Calu3 (cell line): ENCODE measurements at regions of chr10 and their contacts with region 1.

Region 1: GRCh38 chr10:75099952-75100763 is 11.3 kb upstream of the SAMD8 start:
- DNase-seq: peak; percentile 94
- H3K4me3 Mint-ChIP-seq: no peak overlapping the region
- H3K27ac Mint-ChIP-seq: no peak overlapping the region
- H3K4me1 Mint-ChIP-seq: peaks cover 14% of the 10 kb centered on the region
- H3K27me3 Mint-ChIP-seq: peaks cover 21% of the 10 kb centered on the region
- CTCF ChIP-seq: peak; percentile 99

Region 2: GRCh38 chr10:74244097-74244685 is 856.0 kb before region 1 on chr10:
- CTCF ChIA-PET with region 1: no interaction called
- intact Hi-C with region 1: loop called (anchors 2 kb)
- DNase-seq: peak; percentile 30
- H3K4me3 Mint-ChIP-seq: no peak overlapping the region
- H3K27ac Mint-ChIP-seq: no peak overlapping the region
- H3K4me1 Mint-ChIP-seq: peaks cover 20% of the 10 kb centered on the region
- H3K27me3 Mint-ChIP-seq: no peaks in the 10 kb centered on the region
- CTCF ChIP-seq: peak; percentile 67

Region 3: DNA sequence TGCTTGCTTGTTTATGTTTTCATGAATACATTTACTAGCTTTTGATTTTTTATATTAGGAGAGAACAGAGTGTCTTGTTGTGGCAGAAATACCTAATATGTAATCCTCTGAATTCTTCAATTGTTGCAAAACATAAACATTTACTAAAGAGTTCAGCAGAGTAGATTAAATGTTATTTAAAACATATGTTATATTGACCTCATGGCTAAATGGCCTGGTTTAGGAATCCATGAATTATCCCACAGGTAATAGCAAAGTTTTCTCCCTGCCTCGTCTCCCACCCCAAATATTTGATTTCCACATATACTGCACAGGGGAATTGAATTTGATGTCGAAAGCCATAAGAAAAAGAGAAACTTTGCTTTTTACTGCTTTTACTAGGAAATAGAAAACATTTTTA is 837.3 kb before region 1 on chr10:
- CTCF ChIA-PET with region 1: interaction called, 3 read pairs
- intact Hi-C with region 1: loop called (anchors 1 kb)
- DNase-seq: no peak
- H3K4me3 Mint-ChIP-seq: no peak overlapping the region
- H3K27ac Mint-ChIP-seq: no peak overlapping the region
- H3K4me1 Mint-ChIP-seq: peaks cover 6% of the 10 kb centered on the region
- H3K27me3 Mint-ChIP-seq: no peaks in the 10 kb centered on the region
- CTCF ChIP-seq: no peak

Region 4: DNA sequence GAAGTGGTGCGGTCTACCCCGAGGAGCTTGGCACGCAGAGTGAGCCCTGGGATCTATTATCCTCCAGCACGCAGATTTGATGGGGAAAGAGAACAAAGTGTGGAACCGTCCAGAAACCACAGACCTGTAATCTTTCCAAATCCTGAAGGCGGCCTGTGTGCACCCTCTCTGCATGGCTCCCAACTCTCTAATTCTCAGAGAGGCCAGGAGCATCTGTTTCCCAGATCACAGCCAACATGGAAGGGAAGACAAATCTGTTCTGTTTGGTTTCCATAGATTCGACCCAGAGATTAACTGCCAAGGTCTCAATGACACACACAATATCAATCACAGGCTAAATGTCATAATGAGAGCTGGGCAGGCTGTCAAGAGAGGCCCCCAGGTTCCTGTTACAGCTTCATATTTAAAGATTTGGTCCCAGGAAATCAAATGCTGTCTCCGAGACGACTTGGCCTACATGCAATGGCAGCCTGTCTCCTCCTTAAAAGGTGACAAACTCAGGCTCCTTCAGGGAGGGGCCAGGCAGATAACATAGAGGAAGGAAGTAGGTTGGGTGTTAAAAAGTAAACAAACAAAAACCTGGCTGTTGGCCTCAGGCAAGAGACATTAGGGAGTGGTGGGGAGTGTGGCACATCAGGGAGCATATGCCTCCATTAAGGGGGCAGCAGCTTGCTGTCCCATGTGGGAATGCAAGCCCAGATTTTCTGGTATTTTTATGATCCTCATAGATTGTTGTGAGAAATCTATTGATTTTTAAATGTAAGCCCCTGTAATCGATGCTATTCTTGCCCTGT is 37.5 kb before region 1 on chr10:
- CTCF ChIA-PET with region 1: no interaction called
- intact Hi-C with region 1: no loop called
- DNase-seq: no peak
- H3K4me3 Mint-ChIP-seq: no peak overlapping the region
- H3K27ac Mint-ChIP-seq: no peak overlapping the region
- H3K4me1 Mint-ChIP-seq: no peaks in the 10 kb centered on the region
- H3K27me3 Mint-ChIP-seq: no peaks in the 10 kb centered on the region
- CTCF ChIP-seq: no peak

Region 5: GRCh38 chr10:75165684-75166622 is 65.8 kb after region 1 on chr10:
- CTCF ChIA-PET with region 1: interaction called, 10 read pairs
- intact Hi-C with region 1: no loop called
- DNase-seq: no peak
- H3K4me3 Mint-ChIP-seq: no peak overlapping the region
- H3K27ac Mint-ChIP-seq: no peak overlapping the region
- H3K4me1 Mint-ChIP-seq: no peaks in the 10 kb centered on the region
- H3K27me3 Mint-ChIP-seq: no peaks in the 10 kb centered on the region
- CTCF ChIP-seq: no peak